ENCODE measurements at regions of chr10 and their contacts with region 1.

Region 1: DNA sequence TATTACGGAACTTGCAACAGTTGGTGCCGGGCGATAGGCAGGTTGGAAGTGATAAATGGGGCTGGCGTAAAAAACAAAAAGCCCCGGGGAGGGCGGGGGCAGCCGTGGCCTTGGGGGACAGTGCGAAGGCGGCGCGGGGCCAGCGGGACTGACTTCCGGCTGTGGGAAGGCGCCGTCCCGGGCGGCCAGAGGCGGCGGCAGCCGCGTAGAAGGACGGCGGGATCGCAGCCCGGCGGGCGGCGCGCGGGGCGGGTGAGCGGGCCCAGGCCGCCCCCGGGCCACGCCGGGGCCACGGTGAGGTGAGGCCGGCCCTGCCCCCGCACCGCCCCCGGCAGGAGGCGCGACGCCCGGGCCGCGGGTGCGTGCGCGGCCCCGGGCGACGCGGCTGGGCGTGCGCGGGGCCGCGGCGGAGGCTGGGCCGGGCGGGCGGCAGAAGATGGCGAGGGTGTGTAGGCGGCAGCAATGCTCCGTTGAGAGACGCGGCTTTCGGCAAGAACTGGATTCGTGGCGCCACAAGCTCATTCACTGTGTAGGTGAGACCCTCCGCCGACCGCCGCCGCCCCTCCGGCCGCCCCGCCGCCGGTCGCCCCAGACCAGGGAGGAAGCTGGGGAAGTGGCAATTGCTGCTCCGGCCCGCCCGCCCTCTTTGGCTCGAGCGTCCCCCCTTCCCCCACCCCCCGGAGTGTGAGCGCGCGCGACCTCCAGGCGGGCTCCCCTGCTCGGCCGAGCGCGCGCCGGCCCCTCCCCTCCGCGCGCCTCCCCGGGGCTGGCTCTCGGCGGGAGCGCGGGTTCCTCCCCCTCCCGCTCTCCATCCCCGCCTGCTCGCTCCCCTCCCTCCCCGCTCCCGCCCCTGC is at the start of gene LCOR:
- DNase-seq: peak; percentile 87
- ATAC-seq: peak; percentile 71
- H3K4me3 Mint-ChIP-seq: peak within 1 kb of the TSS; percentile 87
- H3K27ac Mint-ChIP-seq: peak within 1 kb of the TSS; percentile 94
- H3K4me1 Mint-ChIP-seq: peaks cover 58% of the 10 kb centered on the region
- H3K27me3 Mint-ChIP-seq: no peaks in the 10 kb centered on the region
- CTCF ChIP-seq: no peak
- total RNA-seq, gene LCOR: 42.8 and 54.9 TPM in 2 replicates

Region 2: GRCh38 chr10:96513698-96514561 is 318.2 kb before region 1 on chr10 and contains the start of gene TLL2:
- CTCF ChIA-PET with region 1: no interaction called
- POLR2A ChIA-PET with region 1: interaction called, 3 read pairs
- intact Hi-C with region 1: loop called (anchors 2 kb)
- DNase-seq: peak; percentile 73
- ATAC-seq: peak; percentile 80
- H3K4me3 Mint-ChIP-seq: peak within 1 kb of the TSS; percentile 83
- H3K27ac Mint-ChIP-seq: peak within 1 kb of the TSS; percentile 74
- H3K4me1 Mint-ChIP-seq: peaks cover 26% of the 10 kb centered on the region
- H3K27me3 Mint-ChIP-seq: peaks cover 11% of the 10 kb centered on the region
- CTCF ChIP-seq: no peak
- total RNA-seq, gene TLL2: 1.6 and 1.8 TPM in 2 replicates

Region 3: DNA sequence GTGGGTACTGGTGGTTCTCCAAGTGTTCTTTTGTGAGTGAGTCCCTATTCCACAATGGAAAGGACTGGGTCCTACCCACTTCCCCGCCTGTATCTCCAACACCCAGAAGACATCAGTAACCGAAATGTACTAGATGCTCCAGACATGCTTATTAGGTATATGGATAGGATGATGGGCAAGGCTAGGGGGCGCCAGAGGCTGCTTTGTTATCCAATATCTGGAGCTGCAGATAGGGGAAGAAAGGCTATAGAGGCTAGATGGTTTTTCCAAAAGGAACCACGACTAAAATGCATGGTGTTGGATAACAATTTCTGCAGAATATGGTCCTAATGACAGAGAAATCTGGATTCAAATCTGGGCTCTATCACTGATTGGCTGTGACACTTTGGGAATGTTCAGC is 189.1 kb before region 1 on chr10:
- CTCF ChIA-PET with region 1: interaction called, 10 read pairs
- POLR2A ChIA-PET with region 1: interaction called, 6 read pairs
- intact Hi-C with region 1: loop called (anchors 1 kb)
- DNase-seq: peak; percentile 54
- ATAC-seq: no peak
- H3K4me3 Mint-ChIP-seq: no peak overlapping the region
- H3K27ac Mint-ChIP-seq: peak overlapping the region; percentile 56
- H3K4me1 Mint-ChIP-seq: peaks cover 58% of the 10 kb centered on the region
- H3K27me3 Mint-ChIP-seq: no peaks in the 10 kb centered on the region
- CTCF ChIP-seq: no peak

Region 4: DNA sequence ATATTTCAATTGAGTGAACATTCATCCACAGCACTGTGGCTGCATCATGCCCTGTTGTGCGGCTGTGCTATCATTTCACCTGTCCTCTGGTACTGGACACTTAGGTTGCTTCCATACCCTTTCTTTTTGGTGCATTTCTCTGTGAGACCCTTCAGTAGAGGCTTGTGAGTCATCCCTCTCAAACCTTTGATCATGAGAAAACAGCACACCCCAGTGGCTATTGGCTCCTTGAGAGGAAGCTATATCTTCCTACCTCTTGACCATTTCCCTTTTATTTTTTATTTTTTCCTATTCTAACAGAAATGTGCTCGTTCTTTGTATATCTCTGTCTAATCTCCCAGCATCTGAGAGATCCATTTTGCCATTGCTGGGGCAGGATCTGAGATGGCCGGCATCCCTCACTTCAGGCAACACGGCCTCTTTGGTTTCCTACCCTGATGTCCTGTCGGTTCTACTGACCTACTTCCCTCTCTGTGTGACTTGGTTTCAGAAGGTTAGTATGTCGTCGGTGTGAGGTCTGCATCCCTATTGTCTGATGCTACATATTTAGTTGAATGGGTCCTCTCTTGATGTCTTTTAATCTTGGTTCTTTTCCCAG is 88.0 kb before region 1 on chr10:
- CTCF ChIA-PET with region 1: interaction called, 3 read pairs
- POLR2A ChIA-PET with region 1: interaction called, 3 read pairs
- intact Hi-C with region 1: loop called (anchors 1 kb)
- DNase-seq: no peak
- ATAC-seq: no peak
- H3K4me3 Mint-ChIP-seq: no peak overlapping the region
- H3K27ac Mint-ChIP-seq: peak overlapping the region; percentile 77
- H3K4me1 Mint-ChIP-seq: peaks cover 73% of the 10 kb centered on the region
- H3K27me3 Mint-ChIP-seq: no peaks in the 10 kb centered on the region
- CTCF ChIP-seq: no peak

Region 5: GRCh38 chr10:96789571-96790108 is 42.5 kb before region 1 on chr10:
- CTCF ChIA-PET with region 1: interaction called, 4 read pairs
- POLR2A ChIA-PET with region 1: interaction called, 6 read pairs
- intact Hi-C with region 1: loop called (anchors 1 kb)
- DNase-seq: no peak
- ATAC-seq: peak; percentile 98
- H3K4me3 Mint-ChIP-seq: peak overlapping the region; percentile 48
- H3K27ac Mint-ChIP-seq: peak overlapping the region; percentile 78
- H3K4me1 Mint-ChIP-seq: peaks cover 19% of the 10 kb centered on the region
- H3K27me3 Mint-ChIP-seq: no peaks in the 10 kb centered on the region
- CTCF ChIP-seq: no peak

Region 6: GRCh38 chr10:96902731-96903358 is 70.8 kb after region 1 on chr10:
- CTCF ChIA-PET with region 1: no interaction called
- POLR2A ChIA-PET with region 1: no interaction called
- intact Hi-C with region 1: loop called (anchors 10 kb)
- DNase-seq: no peak
- ATAC-seq: no peak
- H3K4me3 Mint-ChIP-seq: no peak overlapping the region
- H3K27ac Mint-ChIP-seq: no peak overlapping the region
- H3K4me1 Mint-ChIP-seq: peaks cover 49% of the 10 kb centered on the region
- H3K27me3 Mint-ChIP-seq: no peaks in the 10 kb centered on the region
- CTCF ChIP-seq: no peak

Region 7: GRCh38 chr10:97081621-97082235 is 249.6 kb after region 1 on chr10:
- CTCF ChIA-PET with region 1: no interaction called
- POLR2A ChIA-PET with region 1: no interaction called
- intact Hi-C with region 1: no loop called
- DNase-seq: peak; percentile 48
- ATAC-seq: no peak
- H3K4me3 Mint-ChIP-seq: no peak overlapping the region
- H3K27ac Mint-ChIP-seq: peak overlapping the region; percentile 9
- H3K4me1 Mint-ChIP-seq: no peaks in the 10 kb centered on the region
- H3K27me3 Mint-ChIP-seq: peaks cover 41% of the 10 kb centered on the region
- CTCF ChIP-seq: no peak

Measured in activated B cell treated with CpG ODN at 0.5 μM for 24 hours (primary cell).